Posterior vena cava (tissue), 2 donors: ENCODE measurements at regions of chr2 and their contacts with region 1.

Region 1: DNA sequence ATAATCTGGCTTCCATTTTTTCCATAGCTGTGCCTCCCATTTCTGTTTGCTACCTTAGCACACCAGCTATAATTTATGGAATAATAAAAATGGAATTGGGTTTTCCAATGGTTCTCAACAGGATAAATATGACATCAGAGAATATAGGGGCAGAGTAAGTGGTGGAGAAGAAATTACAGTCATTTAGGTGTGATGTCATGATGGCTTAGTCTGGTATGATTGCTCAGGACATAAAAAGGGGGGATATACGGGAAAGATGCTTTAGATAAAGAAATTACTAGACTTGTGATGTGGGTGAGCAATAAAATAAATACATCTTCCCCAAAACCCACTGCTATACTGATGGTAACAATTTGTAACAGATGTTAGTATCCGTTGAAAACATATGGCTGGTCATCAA is 21.6 kb upstream of the KIF5C start:
- DNase-seq: no peak

Region 2: GRCh38 chr2:147061269-147061668 is 1792.2 kb before region 1 on chr2:
- intact Hi-C with region 1: no loop called
- DNase-seq: no peak

Region 3: DNA sequence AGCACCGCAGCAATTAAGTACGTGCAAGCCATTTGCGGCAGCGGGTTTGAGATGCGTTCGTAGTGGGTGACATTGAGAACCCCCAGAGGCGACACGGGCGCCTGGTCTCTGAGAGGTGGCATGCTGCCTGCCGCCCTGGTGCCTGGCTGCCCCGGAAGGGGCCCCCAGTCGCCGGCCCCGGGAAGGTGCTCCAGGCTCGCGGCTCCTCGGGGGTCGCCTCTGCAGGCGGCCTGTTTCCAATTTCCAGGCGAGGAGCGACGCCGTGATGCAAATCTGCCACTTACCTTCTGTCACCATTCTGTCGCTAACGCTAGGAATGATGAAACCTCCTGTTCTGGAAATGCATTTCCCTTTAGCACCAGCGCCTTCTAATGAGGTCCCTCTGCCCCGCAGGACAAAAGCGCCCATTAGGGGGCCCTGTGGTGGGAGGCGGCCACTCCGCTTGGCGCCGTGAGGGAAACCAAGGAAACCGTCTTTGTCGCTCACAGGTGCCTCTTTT is 34.6 kb after region 1 on chr2:
- intact Hi-C with region 1: loop called in 1 of 2 experiments (anchors 1 kb)
- DNase-seq: no peak

Region 4: GRCh38 chr2:149040451-149040850 is 187.0 kb after region 1 on chr2:
- intact Hi-C with region 1: no loop called
- DNase-seq: no peak